Dendritic cell treated with granulocyte-macrophage colony-stimulating factor and Interleukin-4, amounts not matched to agents 40 ng/mL and 50 ng/mL, for 4 days (primary cell): ENCODE measurements at regions of chr4 and their contacts with region 1.

Region 1: GRCh38 chr4:75939890-75940691 is 722 bp downstream of the NAAA start:
- H3K4me3 Mint-ChIP-seq: peak overlapping the region; percentile 97
- H3K27ac Mint-ChIP-seq: peak overlapping the region; percentile 99
- H3K4me1 Mint-ChIP-seq: peaks cover 40% of the 10 kb centered on the region
- H3K27me3 Mint-ChIP-seq: no peaks in the 10 kb centered on the region

Region 2: DNA sequence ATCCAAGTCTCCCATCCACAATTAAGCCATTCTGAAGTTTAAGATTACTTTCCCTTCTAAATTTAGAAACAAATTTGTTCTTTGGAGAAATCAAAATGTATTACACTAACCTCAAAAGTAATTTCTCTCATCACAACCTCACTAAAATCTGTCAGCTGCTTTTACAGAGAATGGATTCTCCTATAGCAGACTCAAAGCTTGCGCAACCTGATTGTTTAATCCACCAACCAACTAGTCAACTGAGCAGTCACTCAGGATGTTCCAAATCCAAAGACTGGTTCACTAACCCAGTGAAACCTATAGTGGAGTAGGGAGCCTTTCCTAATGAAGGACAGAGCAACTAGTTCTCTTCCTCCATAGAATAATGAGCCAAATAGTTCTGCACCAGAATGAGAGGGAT is 470.2 kb before region 1 on chr4:
- intact Hi-C with region 1: no loop called
- H3K4me3 Mint-ChIP-seq: no peak overlapping the region
- H3K27ac Mint-ChIP-seq: no peak overlapping the region
- H3K4me1 Mint-ChIP-seq: no peaks in the 10 kb centered on the region
- H3K27me3 Mint-ChIP-seq: no peaks in the 10 kb centered on the region

Region 3: GRCh38 chr4:75653845-75654503 is 286.1 kb before region 1 on chr4:
- intact Hi-C with region 1: loop called (anchors 10 kb)
- H3K4me3 Mint-ChIP-seq: no peak overlapping the region
- H3K27ac Mint-ChIP-seq: no peak overlapping the region
- H3K4me1 Mint-ChIP-seq: no peaks in the 10 kb centered on the region
- H3K27me3 Mint-ChIP-seq: no peaks in the 10 kb centered on the region

Region 4: DNA sequence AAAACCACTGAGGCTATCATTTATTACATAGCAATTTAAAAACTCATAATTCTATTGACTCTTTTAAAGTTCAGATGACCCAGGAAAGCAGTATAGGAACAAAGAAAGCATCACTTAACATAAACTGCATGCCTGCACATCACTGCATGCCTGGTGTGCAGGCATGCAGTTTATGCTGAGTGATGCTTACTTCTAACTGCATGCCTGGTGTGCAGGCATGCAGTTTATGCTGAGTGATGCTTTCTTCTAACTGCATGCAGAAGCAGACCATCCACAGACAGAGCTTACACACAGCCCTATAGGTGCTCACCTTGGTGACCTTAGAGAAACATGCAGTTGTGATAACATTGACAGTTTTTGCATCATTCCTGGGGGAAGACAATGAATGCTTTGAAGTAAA is 33.7 kb after region 1 on chr4:
- intact Hi-C with region 1: loop called (anchors 5 kb)
- H3K4me3 Mint-ChIP-seq: no peak overlapping the region
- H3K27ac Mint-ChIP-seq: no peak overlapping the region
- H3K4me1 Mint-ChIP-seq: peaks cover 6% of the 10 kb centered on the region
- H3K27me3 Mint-ChIP-seq: no peaks in the 10 kb centered on the region

Region 5: DNA sequence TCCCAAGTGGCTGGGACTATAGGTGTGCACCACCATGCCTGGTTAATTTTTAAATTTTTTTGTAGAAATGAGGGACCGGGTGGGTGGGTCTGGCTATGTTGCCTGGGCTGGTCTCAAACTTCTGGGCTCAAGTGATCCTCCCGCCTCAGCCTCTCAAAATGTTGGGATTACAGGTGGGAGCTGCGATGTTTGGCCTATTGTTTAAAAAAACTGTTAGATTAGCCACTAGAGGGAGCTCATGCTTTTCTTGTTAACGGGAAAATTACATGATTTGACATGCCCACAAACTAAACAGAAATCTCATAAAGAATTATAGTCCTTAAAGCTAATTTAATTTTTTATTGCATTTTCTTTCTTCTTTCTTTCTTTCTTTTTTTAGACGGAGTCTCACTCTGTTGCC is 55.6 kb after region 1 on chr4:
- intact Hi-C with region 1: loop called (anchors 1 kb)
- H3K4me3 Mint-ChIP-seq: no peak overlapping the region
- H3K27ac Mint-ChIP-seq: no peak overlapping the region
- H3K4me1 Mint-ChIP-seq: no peaks in the 10 kb centered on the region
- H3K27me3 Mint-ChIP-seq: peaks cover 6% of the 10 kb centered on the region